ENCODE measurements at regions of chr15 and their contacts with region 1.

Region 1: GRCh38 chr15:39125904-39126303 is 455.0 kb upstream of the THBS1 start:
- DNase-seq: peak in 1 of 2 experiments; percentile 22
- H3K4me3 ChIP-seq: no peak overlapping the region
- H3K27ac ChIP-seq: no peak overlapping the region
- H3K4me1 ChIP-seq: peaks cover 74% of the 10 kb centered on the region
- H3K27me3 ChIP-seq: no peaks in the 10 kb centered on the region
- CTCF ChIP-seq: peak; percentile 51; the same call in 1 of the 2 replicates

Region 2: GRCh38 chr15:38817427-38818156 is 308.3 kb before region 1 on chr15:
- CTCF ChIA-PET with region 1: no interaction called
- POLR2A ChIA-PET with region 1: no interaction called
- intact Hi-C with region 1: loop called (anchors 1 kb)
- DNase-seq: peak; percentile 56 to 93
- H3K4me3 ChIP-seq: no peak overlapping the region
- H3K27ac ChIP-seq: no peak overlapping the region
- H3K4me1 ChIP-seq: no peaks in the 10 kb centered on the region
- H3K27me3 ChIP-seq: no peaks in the 10 kb centered on the region
- CTCF ChIP-seq: peak; percentile 93

Region 3: DNA sequence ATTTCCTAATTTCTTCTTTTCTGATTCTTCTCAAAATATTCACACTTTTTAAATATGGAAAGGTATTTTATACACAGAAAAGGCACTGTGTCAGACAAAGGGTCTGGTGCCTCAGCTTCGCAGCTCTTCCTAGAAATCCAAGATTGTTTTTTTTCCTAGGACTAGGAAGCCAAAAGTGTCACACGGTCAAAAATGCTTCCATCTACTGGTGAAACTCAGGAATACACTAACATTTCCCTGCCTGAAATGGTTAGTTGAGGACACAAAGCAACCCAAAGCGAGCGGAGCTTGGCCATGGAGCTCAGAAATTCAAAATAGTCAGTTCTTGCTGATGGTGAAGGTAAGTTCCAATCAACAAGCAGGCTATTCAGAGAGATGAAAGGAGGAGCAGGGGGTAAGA is 134.8 kb before region 1 on chr15:
- CTCF ChIA-PET with region 1: no interaction called
- POLR2A ChIA-PET with region 1: no interaction called
- intact Hi-C with region 1: loop called (anchors 5 kb)
- DNase-seq: no peak
- H3K4me3 ChIP-seq: no peak overlapping the region
- H3K27ac ChIP-seq: no peak overlapping the region
- H3K4me1 ChIP-seq: no peaks in the 10 kb centered on the region
- H3K27me3 ChIP-seq: no peaks in the 10 kb centered on the region
- CTCF ChIP-seq: peak; percentile 43

Region 4: DNA sequence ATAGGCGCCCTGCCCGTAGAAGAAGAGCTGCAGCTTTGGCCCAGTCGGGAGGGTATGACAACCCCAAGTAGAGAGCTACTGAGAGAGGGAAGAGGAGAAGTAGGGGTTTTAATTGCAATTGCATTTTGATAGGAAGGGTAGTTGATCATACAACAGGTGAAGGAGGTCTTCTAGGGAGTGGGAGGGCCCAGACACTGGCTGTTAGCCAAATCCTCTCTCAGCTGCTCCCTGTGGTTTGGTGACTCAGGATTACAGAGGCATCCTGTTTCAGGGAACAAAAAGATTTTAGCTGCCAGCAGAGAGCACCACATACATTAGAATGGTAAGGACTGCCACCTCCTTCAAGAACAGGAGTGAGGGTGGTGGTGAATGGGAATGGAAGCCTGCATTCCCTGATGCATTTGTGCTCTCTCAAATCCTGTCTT is 46.1 kb after region 1 on chr15:
- CTCF ChIA-PET with region 1: no interaction called
- POLR2A ChIA-PET with region 1: no interaction called
- intact Hi-C with region 1: loop called (anchors 1 kb)
- DNase-seq: peak; percentile 85 to 88
- H3K4me3 ChIP-seq: no peak overlapping the region
- H3K27ac ChIP-seq: peak overlapping the region; percentile 34; the same call in 1 of the 2 replicates
- H3K4me1 ChIP-seq: peaks cover 12% of the 10 kb centered on the region
- H3K27me3 ChIP-seq: no peaks in the 10 kb centered on the region
- CTCF ChIP-seq: peak; percentile 66

Region 5: DNA sequence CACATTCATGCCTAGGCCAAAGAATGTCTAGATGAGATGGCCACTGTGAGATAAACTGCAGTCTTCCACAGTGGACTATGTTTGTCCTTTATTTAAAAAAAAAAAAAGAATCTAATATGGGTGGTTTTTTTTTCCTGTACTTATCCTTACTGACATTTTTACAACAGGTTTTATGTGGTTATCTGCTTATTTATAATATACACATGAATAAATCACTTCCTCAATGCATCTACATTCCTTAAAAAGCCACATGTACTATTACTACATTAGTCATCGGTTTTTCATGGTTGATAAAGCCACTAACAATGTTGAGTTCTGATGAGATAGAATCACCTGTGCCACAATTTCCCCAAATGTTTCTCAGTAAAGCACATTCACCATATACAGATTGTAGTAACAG is 113.7 kb after region 1 on chr15:
- CTCF ChIA-PET with region 1: no interaction called
- POLR2A ChIA-PET with region 1: no interaction called
- intact Hi-C with region 1: loop called (anchors 2 kb)
- DNase-seq: peak in 1 of 2 experiments; percentile 67
- H3K4me3 ChIP-seq: no peak overlapping the region
- H3K27ac ChIP-seq: no peak overlapping the region
- H3K4me1 ChIP-seq: peaks cover 23% of the 10 kb centered on the region
- H3K27me3 ChIP-seq: no peaks in the 10 kb centered on the region
- CTCF ChIP-seq: no peak

Region 6: GRCh38 chr15:39756806-39757522 is 631.1 kb after region 1 on chr15:
- CTCF ChIA-PET with region 1: no interaction called
- POLR2A ChIA-PET with region 1: no interaction called
- intact Hi-C with region 1: loop called (anchors 5 kb)
- DNase-seq: peak; percentile 7 to 35
- H3K4me3 ChIP-seq: no peak overlapping the region
- H3K27ac ChIP-seq: no peak overlapping the region
- H3K4me1 ChIP-seq: no peaks in the 10 kb centered on the region
- H3K27me3 ChIP-seq: no peaks in the 10 kb centered on the region
- CTCF ChIP-seq: peak; percentile 76